ENCODE measurements at regions of chr3 and their contacts with region 1.

Region 1: DNA sequence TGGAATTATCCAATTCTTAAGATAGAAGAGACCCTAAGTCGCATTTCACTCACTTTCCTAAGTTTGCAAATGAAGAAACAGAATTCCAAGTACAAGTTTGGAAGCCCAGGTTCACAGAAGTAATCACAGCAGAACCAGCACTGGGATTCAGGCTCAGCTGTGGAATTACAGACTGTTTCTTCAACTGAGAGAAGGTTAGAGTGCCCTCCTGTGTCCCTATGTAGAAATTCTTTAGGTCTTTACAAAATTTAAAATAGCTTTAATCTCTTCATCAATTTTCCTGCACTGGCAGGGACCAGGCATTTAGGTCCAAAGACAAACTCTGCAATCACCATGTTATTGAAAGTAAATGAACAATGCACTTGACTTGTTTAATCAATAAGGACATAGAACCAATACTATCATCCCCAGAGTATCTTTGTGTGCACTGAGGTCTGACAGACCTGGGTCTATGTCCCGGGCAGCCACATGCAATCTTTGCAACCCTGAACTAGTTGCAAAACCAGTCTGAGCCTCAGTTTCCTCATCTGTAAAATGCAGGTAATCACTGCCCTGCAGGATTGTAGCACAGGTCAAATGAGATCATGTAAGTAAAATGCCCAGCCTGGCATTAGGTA is 96.3 kb upstream of the ZBED2 start:
- DNase-seq: peak; percentile 40
- H3K4me3 ChIP-seq: no peak overlapping the region
- H3K27ac ChIP-seq: no peak overlapping the region
- H3K4me1 ChIP-seq: peaks cover 37% of the 10 kb centered on the region
- H3K27me3 ChIP-seq: no peaks in the 10 kb centered on the region
- CTCF ChIP-seq: peak; percentile 54 to 61

Region 2: DNA sequence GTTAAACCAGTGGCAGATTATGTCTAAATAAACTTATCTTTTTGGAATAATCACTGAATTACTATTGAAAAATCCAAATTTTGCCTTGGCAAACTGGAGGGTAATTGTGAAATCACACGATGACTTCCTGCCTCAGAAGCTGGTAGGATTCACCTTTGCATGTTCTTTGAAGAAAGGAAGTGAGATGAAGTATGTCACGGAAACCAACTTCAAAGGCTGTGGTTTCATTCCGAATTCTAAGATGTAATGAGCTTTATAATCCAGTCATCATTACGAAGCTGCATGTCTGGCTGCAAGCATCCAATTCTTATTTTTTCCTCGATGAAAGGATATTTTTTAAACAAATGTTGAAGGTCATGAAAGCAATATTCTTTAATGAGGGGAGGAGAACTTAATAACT is 81.2 kb before region 1 on chr3:
- CTCF ChIA-PET with region 1: no interaction called
- dilution Hi-C with region 1: no loop called
- in situ Hi-C with region 1: no loop called
- intact Hi-C with region 1: loop called (anchors 2 kb)
- DNase-seq: peak; percentile 81
- H3K4me3 ChIP-seq: peak overlapping the region; percentile 6 to 21 (median 10)
- H3K27ac ChIP-seq: peak overlapping the region; percentile 95
- H3K4me1 ChIP-seq: peaks cover 24% of the 10 kb centered on the region
- H3K27me3 ChIP-seq: no peaks in the 10 kb centered on the region
- CTCF ChIP-seq: no peak

Region 3: DNA sequence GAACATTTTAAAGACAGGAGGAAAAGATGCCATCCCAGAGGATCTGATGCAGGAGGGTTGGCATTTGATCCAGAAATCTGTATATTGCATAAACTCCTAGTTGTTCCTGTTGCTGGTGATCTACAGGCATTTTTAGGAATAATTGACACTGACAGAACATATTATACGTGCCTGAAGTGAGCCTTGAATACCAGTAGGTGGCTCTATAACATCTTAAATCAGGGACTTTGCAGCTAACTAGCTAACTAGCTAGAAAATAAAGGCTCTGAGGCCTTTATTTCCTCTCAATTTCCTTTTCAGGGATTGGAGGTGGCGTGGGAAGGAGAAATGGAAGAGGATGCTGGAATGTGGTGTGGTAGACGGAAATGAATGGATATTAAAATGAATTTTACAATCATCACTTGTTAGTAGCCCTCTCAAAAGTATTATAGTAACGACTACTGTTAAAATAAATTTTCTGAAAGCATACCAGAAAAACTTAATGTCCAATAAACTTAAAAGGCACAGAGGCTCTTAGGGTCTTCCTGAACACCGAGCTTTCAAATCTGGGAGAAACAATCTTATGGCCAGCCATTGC is 22.4 kb before region 1 on chr3:
- CTCF ChIA-PET with region 1: interaction called, 10 read pairs
- dilution Hi-C with region 1: no loop called
- in situ Hi-C with region 1: no loop called
- intact Hi-C with region 1: loop called (anchors 1 kb)
- DNase-seq: peak; percentile 48
- H3K4me3 ChIP-seq: no peak overlapping the region
- H3K27ac ChIP-seq: no peak overlapping the region
- H3K4me1 ChIP-seq: peaks cover 49% of the 10 kb centered on the region
- H3K27me3 ChIP-seq: no peaks in the 10 kb centered on the region
- CTCF ChIP-seq: peak; percentile 76 to 85

Region 4: DNA sequence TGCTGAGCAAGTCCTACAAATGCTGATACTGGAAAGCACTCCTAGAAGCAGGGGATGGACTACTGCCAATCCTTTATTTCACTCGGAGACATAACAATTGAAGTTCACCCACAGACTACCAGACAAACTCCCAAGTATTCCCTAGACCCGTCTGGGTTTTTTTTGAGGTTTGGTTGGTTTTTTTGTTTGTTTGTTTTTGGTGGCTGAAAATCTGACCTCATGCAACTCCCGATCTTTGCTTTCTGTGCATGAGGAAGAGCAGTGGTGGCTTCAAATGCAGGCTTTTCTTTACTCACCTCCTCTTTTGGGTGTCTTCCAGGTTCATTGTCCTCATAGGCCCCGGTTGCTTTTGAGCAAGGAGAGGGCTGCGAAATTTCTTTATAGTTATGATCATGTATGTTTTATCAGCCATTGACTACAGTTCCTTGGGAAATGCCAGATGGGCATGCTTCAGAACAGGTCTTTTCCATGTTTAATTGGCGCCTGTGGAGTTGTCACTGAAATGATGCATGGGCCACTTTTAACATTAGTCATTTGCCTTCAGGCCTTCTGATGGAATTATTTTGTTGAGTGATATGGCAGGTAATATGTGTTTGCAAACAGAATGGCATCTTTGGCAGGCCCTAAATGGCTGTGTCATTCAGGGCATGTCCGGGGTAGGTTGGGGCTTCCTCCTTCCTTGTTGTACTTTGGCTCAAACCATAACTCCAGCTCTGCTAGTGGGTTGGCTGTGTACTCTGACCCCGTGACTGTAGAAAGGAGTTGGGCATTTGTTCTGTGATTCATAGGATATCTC is 15.0 kb before region 1 on chr3:
- CTCF ChIA-PET with region 1: no interaction called
- dilution Hi-C with region 1: no loop called
- in situ Hi-C with region 1: no loop called
- intact Hi-C with region 1: loop called (anchors 1 kb)
- DNase-seq: peak; percentile 88
- H3K4me3 ChIP-seq: peak overlapping the region; percentile 6 to 70 (median 57)
- H3K27ac ChIP-seq: peak overlapping the region; percentile 57
- H3K4me1 ChIP-seq: peaks cover 36% of the 10 kb centered on the region
- H3K27me3 ChIP-seq: no peaks in the 10 kb centered on the region
- CTCF ChIP-seq: no peak

Region 5: GRCh38 chr3:111803123-111803593 is 111.8 kb after region 1 on chr3:
- CTCF ChIA-PET with region 1: no interaction called
- dilution Hi-C with region 1: no loop called
- in situ Hi-C with region 1: no loop called
- intact Hi-C with region 1: no loop called
- DNase-seq: peak; percentile 96
- H3K4me3 ChIP-seq: peak overlapping the region in 1 of 3 experiments; percentile 4
- H3K27ac ChIP-seq: peak overlapping the region; percentile 100
- H3K4me1 ChIP-seq: peaks cover 40% of the 10 kb centered on the region
- H3K27me3 ChIP-seq: no peaks in the 10 kb centered on the region
- CTCF ChIP-seq: no peak